ENCODE measurements at regions of chr9 and their contacts with region 1.

Region 1: DNA sequence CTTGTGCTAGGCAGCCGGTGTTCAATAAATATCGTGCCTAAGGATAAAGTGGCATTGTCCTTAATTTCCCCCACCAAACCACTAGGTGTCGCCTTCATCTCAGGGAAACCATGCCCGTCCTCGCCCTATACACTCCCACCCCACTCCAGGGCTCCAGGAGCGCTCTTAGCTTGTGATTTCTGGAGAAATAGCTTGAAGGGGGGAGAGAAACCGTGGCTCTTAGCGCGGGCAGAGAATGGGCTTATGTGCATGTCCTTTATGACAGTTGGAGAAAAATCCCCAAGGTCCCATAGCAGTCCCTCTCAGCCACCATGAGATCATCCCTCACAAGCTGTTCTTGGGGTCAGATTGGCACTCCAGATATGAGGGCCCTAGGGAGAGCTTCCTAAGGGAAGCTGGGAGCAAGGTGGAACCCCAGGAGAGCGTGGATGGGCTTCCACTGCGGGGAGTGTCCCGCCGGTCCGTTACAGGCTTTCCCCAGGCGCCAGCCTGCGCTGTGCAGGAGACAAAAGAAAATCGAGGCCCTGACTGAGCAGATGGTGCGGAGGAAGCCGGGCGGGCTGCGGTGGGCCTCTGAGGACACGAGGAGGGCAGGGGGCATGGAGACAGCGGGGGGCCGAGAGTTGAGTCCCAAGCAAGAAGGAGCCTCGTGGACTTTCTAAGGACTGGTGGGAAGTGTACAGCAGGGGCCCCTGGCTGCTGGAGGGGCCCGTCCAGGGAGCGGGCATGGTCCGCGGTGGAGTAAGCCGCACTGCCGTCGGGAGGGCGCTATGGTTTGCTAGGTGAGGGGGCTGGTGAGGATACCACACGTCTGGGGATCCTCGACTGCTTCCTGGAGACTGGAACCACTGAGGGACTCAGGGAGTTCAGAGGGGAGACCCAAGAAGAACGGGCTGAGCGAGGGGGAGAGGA is 750 bp upstream of the NPR2 start:
- DNase-seq: no peak
- H3K4me3 ChIP-seq: peak overlapping the region; percentile 22 to 74 (median 50)
- H3K27ac ChIP-seq: peak overlapping the region; percentile 67 to 89 (median 76)
- H3K4me1 ChIP-seq: peaks cover 5 to 43% (median 18%) of the 10 kb centered on the region in 3 donors
- H3K27me3 ChIP-seq: peaks cover 0 to 29% (median 0%) of the 10 kb centered on the region in 4 donors
- CTCF ChIP-seq: peak; percentile 67 to 89 (median 85)
- POLR2A ChIP-seq: no peak

Region 2: GRCh38 chr9:35844716-35845270 is 54.2 kb after region 1 on chr9:
- intact Hi-C with region 1: no loop called
- DNase-seq: peak; percentile 35
- H3K4me3 ChIP-seq: no peak overlapping the region
- H3K27ac ChIP-seq: peak overlapping the region; percentile 53 to 80 (median 70)
- H3K4me1 ChIP-seq: peaks cover 30 to 62% (median 33%) of the 10 kb centered on the region in 3 donors
- H3K27me3 ChIP-seq: peaks cover 0 to 72% (median 0%) of the 10 kb centered on the region in 4 donors
- CTCF ChIP-seq: no peak
- POLR2A ChIP-seq: no peak

Region 3: GRCh38 chr9:35882263-35882848 is 91.7 kb after region 1 on chr9:
- intact Hi-C with region 1: loop called (anchors 5 kb)
- DNase-seq: no peak
- H3K4me3 ChIP-seq: no peak overlapping the region
- H3K27ac ChIP-seq: no peak overlapping the region
- H3K4me1 ChIP-seq: no peaks in the 10 kb centered on the region
- H3K27me3 ChIP-seq: peaks cover 0 to 12% (median 0%) of the 10 kb centered on the region in 4 donors
- CTCF ChIP-seq: peak; percentile 91 to 97 (median 94)
- POLR2A ChIP-seq: no peak